Activated CD4-positive, alpha-beta T cell treated with anti-CD3 and anti-CD28 coated beads, Interleukin-2, amount 10 ng/mL, durations not matched to agents 24 days and 14 days (primary cell): ENCODE measurements at regions of chr20 and their contacts with region 1.

Region 1: GRCh38 chr20:51128198-51128597 is 105.3 kb upstream of the KCNG1 start:
- DNase-seq: peak; percentile 59
- H3K4me3 Mint-ChIP-seq: peak overlapping the region; percentile 15
- H3K27ac Mint-ChIP-seq: peak overlapping the region; percentile 63
- H3K4me1 Mint-ChIP-seq: peaks cover 10% of the 10 kb centered on the region
- H3K27me3 Mint-ChIP-seq: peaks cover 9% of the 10 kb centered on the region

Region 2: GRCh38 chr20:51091406-51092195 is 36.6 kb before region 1 on chr20:
- intact Hi-C with region 1: loop called (anchors 5 kb)
- DNase-seq: no peak
- H3K4me3 Mint-ChIP-seq: peak overlapping the region; percentile 36
- H3K27ac Mint-ChIP-seq: no peak overlapping the region
- H3K4me1 Mint-ChIP-seq: peaks cover 9% of the 10 kb centered on the region
- H3K27me3 Mint-ChIP-seq: peaks cover 44% of the 10 kb centered on the region

Region 3: GRCh38 chr20:51116771-51117686 is 11.2 kb before region 1 on chr20:
- intact Hi-C with region 1: no loop called
- DNase-seq: no peak
- H3K4me3 Mint-ChIP-seq: no peak overlapping the region
- H3K27ac Mint-ChIP-seq: no peak overlapping the region
- H3K4me1 Mint-ChIP-seq: no peaks in the 10 kb centered on the region
- H3K27me3 Mint-ChIP-seq: peaks cover 20% of the 10 kb centered on the region

Region 4: GRCh38 chr20:51190778-51191170 is 62.6 kb after region 1 on chr20:
- intact Hi-C with region 1: no loop called
- DNase-seq: no peak
- H3K4me3 Mint-ChIP-seq: no peak overlapping the region
- H3K27ac Mint-ChIP-seq: no peak overlapping the region
- H3K4me1 Mint-ChIP-seq: no peaks in the 10 kb centered on the region
- H3K27me3 Mint-ChIP-seq: peaks cover 8% of the 10 kb centered on the region